Activated CD8-positive, alpha-beta T cell treated with anti-CD3 and anti-CD28 coated beads, Interleukin-2, amount 10 ng/mL, durations not matched to agents 7 days and 5 days (primary cell): ENCODE measurements at regions of chr17 and their contacts with region 1.

Region 1: GRCh38 chr17:1648963-1649843 is 463 bp downstream of the RILP start:
- DNase-seq: peak; percentile 95
- ATAC-seq: peak; percentile 80
- H3K4me3 Mint-ChIP-seq: peak overlapping the region; percentile 66
- H3K27ac Mint-ChIP-seq: peak overlapping the region; percentile 63
- H3K4me1 Mint-ChIP-seq: peaks cover 43% of the 10 kb centered on the region
- H3K27me3 Mint-ChIP-seq: no peaks in the 10 kb centered on the region

Region 2: GRCh38 chr17:1573916-1574696 is 75.1 kb before region 1 on chr17:
- CTCF ChIA-PET with region 1: interaction called, 23 read pairs
- POLR2A ChIA-PET with region 1: no interaction called
- DNase-seq: peak; percentile 73
- ATAC-seq: peak; percentile 84
- H3K4me3 Mint-ChIP-seq: no peak overlapping the region
- H3K27ac Mint-ChIP-seq: no peak overlapping the region
- H3K4me1 Mint-ChIP-seq: peaks cover 14% of the 10 kb centered on the region
- H3K27me3 Mint-ChIP-seq: no peaks in the 10 kb centered on the region

Region 3: DNA sequence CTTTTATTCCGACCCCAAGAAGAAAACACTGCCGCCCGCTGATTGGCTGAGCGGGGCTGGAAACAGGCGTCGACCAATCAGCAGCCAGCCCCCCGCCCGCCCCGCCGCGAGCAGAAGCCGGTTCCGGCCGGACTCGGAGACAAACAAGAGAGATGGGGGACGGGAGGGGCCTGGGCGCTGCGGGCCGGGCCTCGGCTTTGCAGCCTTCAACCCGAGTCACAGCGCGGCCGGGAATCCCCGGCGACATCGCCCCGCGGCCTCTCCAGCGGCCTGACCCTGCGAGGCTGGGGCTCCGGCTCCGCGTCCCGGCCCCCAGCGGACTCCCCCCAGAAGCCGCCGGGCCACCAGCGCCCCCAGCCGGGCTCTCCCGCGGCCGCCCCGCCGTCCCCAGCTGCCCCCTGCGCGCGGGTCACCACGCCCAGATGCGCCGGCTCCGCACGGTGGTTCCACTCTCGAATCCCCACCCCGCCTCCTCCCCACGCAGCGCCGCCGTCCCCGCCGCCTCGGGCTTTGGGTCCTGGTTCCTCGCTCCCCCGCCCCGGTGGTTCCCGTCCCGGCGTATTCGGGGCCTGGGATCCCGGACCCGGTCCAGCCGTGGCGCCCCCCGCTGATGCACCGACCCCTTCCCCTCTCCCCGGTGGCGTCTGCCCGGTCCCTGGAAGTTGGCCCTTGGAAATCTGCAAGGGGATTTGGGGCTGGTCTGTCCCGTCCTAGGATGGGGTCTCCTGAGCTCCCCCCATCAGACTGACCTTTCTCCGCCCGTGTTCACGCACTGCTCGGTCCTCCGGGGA is 20.2 kb before region 1 on chr17:
- CTCF ChIA-PET with region 1: interaction called, 21 read pairs
- POLR2A ChIA-PET with region 1: no interaction called
- DNase-seq: peak; percentile 94
- ATAC-seq: peak; percentile 85
- H3K4me3 Mint-ChIP-seq: peak overlapping the region; percentile 85
- H3K27ac Mint-ChIP-seq: peak overlapping the region; percentile 78
- H3K4me1 Mint-ChIP-seq: peaks cover 28% of the 10 kb centered on the region
- H3K27me3 Mint-ChIP-seq: peaks cover 22% of the 10 kb centered on the region

Region 4: GRCh38 chr17:1673041-1673785 is 24.0 kb after region 1 on chr17:
- CTCF ChIA-PET with region 1: interaction called, 52 read pairs
- POLR2A ChIA-PET with region 1: interaction called, 3 read pairs
- DNase-seq: no peak
- ATAC-seq: peak; percentile 31
- H3K4me3 Mint-ChIP-seq: no peak overlapping the region
- H3K27ac Mint-ChIP-seq: no peak overlapping the region
- H3K4me1 Mint-ChIP-seq: peaks cover 3% of the 10 kb centered on the region
- H3K27me3 Mint-ChIP-seq: no peaks in the 10 kb centered on the region

Region 5: GRCh38 chr17:1684378-1685189 is 35.4 kb after region 1 on chr17 and contains the start of gene PRPF8:
- CTCF ChIA-PET with region 1: interaction called, 13 read pairs
- POLR2A ChIA-PET with region 1: no interaction called
- DNase-seq: peak; percentile 99
- ATAC-seq: peak; percentile 100
- H3K4me3 Mint-ChIP-seq: peak within 1 kb of the TSS; percentile 99
- H3K27ac Mint-ChIP-seq: peak within 1 kb of the TSS; percentile 94
- H3K4me1 Mint-ChIP-seq: peaks cover 33% of the 10 kb centered on the region
- H3K27me3 Mint-ChIP-seq: no peaks in the 10 kb centered on the region
- total RNA-seq, gene PRPF8: 309 to 321 TPM